ENCODE measurements at regions of chr14 and their contacts with region 1.

Region 1: DNA sequence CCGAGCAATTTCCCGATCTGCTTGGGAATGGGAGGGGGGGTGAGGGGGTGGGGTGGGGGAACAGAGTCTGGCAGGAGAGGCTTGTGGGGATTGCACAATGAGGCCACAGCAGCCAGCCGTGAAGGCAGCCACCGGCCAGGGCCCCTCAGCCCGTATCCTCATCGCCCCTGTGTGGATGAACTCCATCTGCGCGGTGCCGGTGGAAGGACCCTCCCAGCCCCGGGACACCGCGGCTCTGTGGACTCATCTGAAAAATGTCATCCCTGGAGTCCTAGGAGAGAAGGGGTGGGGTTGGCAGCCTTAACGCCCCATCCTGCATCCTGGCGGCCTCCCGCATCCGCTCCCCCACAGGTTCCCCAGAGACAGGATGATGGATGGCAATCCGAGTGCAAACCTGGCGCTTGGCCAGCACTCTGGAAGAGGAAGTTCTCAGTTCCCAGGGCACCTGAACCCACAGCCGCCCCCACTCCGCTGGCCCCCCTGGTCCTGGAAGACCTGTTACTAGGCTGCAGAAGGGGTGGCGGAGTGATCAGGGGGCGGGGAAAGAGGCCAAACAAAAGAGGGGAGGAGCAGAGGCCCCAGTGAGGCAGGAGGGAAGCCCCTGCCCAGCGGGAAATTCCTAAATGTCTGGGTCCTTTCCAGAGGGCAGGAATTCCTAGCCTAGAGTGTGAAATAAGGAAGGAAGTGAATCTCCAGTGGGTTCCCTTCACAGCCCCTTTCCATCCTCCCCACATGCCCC is 1.2 kb upstream of the TNFAIP2 start:
- DNase-seq: peak; percentile 72
- H3K4me3 ChIP-seq: peak overlapping the region in 1 of 2 donors; percentile 64
- H3K27ac ChIP-seq: peak overlapping the region; percentile 37 to 83
- H3K4me1 ChIP-seq: peaks cover 37% of the 10 kb centered on the region
- H3K27me3 ChIP-seq: no peaks in the 10 kb centered on the region
- CTCF ChIP-seq: no peak
- POLR2A ChIP-seq: no peak

Region 2: GRCh38 chr14:103279137-103280025 is 157.4 kb after region 1 on chr14:
- intact Hi-C with region 1: loop called (anchors 10 kb)
- DNase-seq: peak; percentile 46
- H3K4me3 ChIP-seq: peak overlapping the region; percentile 36 to 47
- H3K27ac ChIP-seq: peak overlapping the region in 1 of 2 donors; percentile 10
- H3K4me1 ChIP-seq: no peaks in the 10 kb centered on the region
- H3K27me3 ChIP-seq: no peaks in the 10 kb centered on the region
- CTCF ChIP-seq: no peak
- POLR2A ChIP-seq: no peak

Measured in testis (tissue), 5 donors.